ENCODE measurements at regions of chr3 and their contacts with region 1.

Region 1: GRCh38 chr3:13648060-13649001 is 99.4 kb downstream of the FBLN2 start:
- DNase-seq: peak; percentile 82 to 95
- ATAC-seq: peak; percentile 65 to 88
- H3K4me3 ChIP-seq: no peak overlapping the region
- H3K27ac ChIP-seq: peak overlapping the region in 1 of 2 experiments; percentile 50; a peak in 2 of 6 replicates
- H3K4me1 ChIP-seq: peaks cover 7% of the 10 kb centered on the region; the same call in 1 of the 3 replicates
- CTCF ChIP-seq: peak; percentile 95
- EP300 ChIP-seq: no peak
- POLR2A ChIP-seq: no peak
- RAD21 ChIP-seq: peak; percentile 98

Region 2: GRCh38 chr3:13461169-13462158 is 186.9 kb before region 1 on chr3:
- CTCF ChIA-PET with region 1: interaction called, 17 read pairs
- POLR2A ChIA-PET with region 1: no interaction called
- DNase-seq: peak; percentile 58 to 84
- ATAC-seq: peak; percentile 74 to 96
- H3K4me3 ChIP-seq: no peak overlapping the region
- H3K27ac ChIP-seq: no peak overlapping the region
- H3K4me1 ChIP-seq: no peaks in the 10 kb centered on the region
- CTCF ChIP-seq: peak; percentile 55
- EP300 ChIP-seq: no peak
- POLR2A ChIP-seq: no peak
- RAD21 ChIP-seq: peak; percentile 26 to 52; a peak in 3 of 5 replicates

Region 3: DNA sequence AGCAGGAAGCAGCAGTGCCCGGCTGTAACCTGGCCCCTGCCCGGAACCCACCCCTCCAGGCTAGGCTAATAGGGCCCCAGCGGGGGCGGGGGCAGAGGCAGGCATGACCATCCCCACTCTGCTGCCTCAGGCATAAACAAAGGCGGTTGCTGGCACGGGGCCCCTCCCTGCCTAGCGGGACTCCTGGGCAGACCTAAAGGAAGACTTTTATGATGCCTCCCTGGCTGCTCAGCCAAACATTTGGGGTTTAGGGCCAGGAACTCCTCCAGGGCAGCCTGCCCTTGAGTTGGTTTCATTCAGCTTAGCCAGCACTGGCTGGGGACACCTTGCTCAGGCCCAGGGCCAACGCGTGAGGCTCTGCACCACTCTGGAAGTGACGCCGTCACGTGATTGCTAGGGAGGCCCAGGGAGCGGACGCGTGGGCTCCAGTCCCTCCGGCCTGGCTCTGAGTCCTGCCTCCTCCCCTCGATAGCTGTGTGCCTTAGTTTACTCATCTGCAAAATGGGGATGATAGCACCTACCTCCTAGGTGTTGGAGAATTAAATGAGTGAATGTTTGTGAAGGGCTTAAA is 140.5 kb before region 1 on chr3:
- CTCF ChIA-PET with region 1: interaction called, 1,096 read pairs
- POLR2A ChIA-PET with region 1: no interaction called
- DNase-seq: no peak
- ATAC-seq: no peak
- H3K4me3 ChIP-seq: no peak overlapping the region
- H3K27ac ChIP-seq: 0 out of 6 replicates have a peak overlapping the region, but pooled peaks of 1 of the 2 experiments have one; percentile 21
- H3K4me1 ChIP-seq: peaks cover 6% of the 10 kb centered on the region; the same call in 1 of the 3 replicates
- CTCF ChIP-seq: no peak
- EP300 ChIP-seq: no peak
- POLR2A ChIP-seq: no peak
- RAD21 ChIP-seq: no peak

Region 4: GRCh38 chr3:13559764-13560525 is 88.4 kb before region 1 on chr3:
- CTCF ChIA-PET with region 1: interaction called, 10 read pairs
- POLR2A ChIA-PET with region 1: no interaction called
- DNase-seq: no peak
- ATAC-seq: no peak
- H3K4me3 ChIP-seq: no peak overlapping the region
- H3K27ac ChIP-seq: no peak overlapping the region
- H3K4me1 ChIP-seq: no peaks in the 10 kb centered on the region
- CTCF ChIP-seq: no peak
- EP300 ChIP-seq: no peak
- POLR2A ChIP-seq: no peak
- RAD21 ChIP-seq: no peak

Region 5: GRCh38 chr3:13612829-13613228 is 35.5 kb before region 1 on chr3:
- CTCF ChIA-PET with region 1: interaction called, 23 read pairs
- POLR2A ChIA-PET with region 1: no interaction called
- DNase-seq: no peak
- ATAC-seq: no peak
- H3K4me3 ChIP-seq: no peak overlapping the region
- H3K27ac ChIP-seq: no peak overlapping the region
- H3K4me1 ChIP-seq: no peaks in the 10 kb centered on the region
- CTCF ChIP-seq: no peak
- EP300 ChIP-seq: no peak
- POLR2A ChIP-seq: no peak
- RAD21 ChIP-seq: no peak

Region 6: DNA sequence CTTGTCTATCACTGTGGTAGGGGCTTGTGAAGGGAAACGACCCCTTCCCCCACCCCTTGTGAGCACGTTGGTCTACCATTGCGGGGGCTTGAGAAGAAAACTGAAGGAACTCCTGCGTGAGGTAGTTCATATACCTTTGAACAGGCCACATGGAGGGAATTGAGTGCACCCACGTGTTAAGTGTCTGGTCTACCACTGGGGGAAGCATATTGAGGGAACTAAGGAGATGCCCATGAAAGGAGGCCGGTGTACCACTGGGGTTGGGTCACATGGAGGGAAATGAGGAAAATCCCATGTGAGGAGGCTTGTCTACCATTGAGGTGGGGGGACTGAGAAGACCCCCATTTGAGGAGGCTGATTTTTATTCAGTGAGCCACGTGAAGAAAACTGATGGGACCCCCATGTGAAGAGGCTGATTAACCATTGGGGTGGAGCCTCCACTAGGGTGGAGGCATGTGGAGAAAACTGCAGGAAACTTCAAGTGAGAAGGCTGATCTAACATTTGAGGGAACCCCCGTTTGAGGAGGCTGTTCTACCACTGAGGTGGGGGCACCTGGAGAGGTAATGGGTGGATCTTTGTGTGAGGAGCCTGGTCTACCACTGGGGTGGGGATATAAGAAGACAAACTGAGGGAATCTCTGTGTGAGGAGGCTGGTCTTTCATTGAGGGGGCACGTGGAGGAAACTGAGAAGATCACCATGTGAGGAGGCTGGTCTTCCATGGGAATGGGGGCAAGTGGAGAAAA is 63.7 kb after region 1 on chr3:
- CTCF ChIA-PET with region 1: no interaction called
- POLR2A ChIA-PET with region 1: no interaction called
- DNase-seq: no peak
- ATAC-seq: peak in 1 of 2 experiments; percentile 56; a peak in 2 of 6 replicates
- H3K4me3 ChIP-seq: no peak overlapping the region
- H3K27ac ChIP-seq: no peak overlapping the region
- H3K4me1 ChIP-seq: no peaks in the 10 kb centered on the region
- CTCF ChIP-seq: no peak
- EP300 ChIP-seq: no peak
- POLR2A ChIP-seq: no peak
- RAD21 ChIP-seq: no peak

Measured in A549 (cell line).